ENCODE measurements at regions of chr6 and their contacts with region 1.

Region 1: DNA sequence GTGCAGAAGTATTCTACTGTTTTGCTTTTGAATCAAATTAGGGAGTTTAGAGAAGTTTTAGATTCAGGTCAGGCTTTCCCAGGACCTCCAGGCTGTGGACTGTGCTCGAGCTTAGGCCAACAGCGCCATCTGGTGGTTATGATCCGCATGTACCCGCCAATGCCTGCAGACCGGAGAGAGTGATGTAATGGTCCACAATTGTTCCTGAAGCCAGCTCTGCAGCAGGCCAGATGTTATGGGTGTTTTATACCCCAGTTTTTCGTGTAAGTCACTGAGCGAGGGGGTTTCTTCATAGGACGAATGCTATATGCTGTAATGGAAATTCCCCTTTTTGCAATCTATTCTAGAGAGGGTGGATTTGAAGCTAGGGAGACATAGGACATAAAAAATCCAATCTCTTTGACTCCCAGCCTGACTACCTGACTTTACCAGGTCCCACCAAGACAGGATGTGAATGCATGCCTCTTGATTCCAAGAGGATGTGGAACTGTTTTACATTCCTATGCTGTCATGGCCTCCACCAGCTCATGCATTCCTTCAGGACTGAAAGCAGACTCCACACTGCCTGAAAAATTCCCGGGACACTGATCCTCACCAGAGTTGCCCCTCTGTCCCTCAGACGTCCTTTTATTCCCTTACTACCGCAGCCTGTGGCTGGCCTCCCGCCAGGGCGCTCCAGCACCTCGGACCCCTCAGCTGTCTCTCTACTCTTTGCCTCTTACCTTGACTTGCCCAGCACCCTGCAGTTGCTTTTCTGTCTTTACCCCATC is 41.2 kb upstream of the LY86 start:
- DNase-seq: peak; percentile 97
- H3K4me3 ChIP-seq: peak overlapping the region; percentile 44 to 60 (median 49)
- H3K27ac ChIP-seq: no peak overlapping the region
- H3K4me1 ChIP-seq: peaks cover 13 to 15% (median 15%) of the 10 kb centered on the region in 4 donors
- H3K27me3 ChIP-seq: peaks cover 0 to 68% (median 4%) of the 10 kb centered on the region in 4 donors
- CTCF ChIP-seq: peak; percentile 71 to 90 (median 85)
- EP300 ChIP-seq: no peak
- POLR2A ChIP-seq: no peak

Region 2: GRCh38 chr6:6057424-6058053 is 489.8 kb before region 1 on chr6:
- intact Hi-C with region 1: loop called (anchors 10 kb)
- DNase-seq: no peak
- H3K4me3 ChIP-seq: no peak overlapping the region
- H3K27ac ChIP-seq: no peak overlapping the region
- H3K4me1 ChIP-seq: no peaks in the 10 kb centered on the region
- H3K27me3 ChIP-seq: peaks cover 0 to 12% (median 0%) of the 10 kb centered on the region in 4 donors
- CTCF ChIP-seq: peak in 2 of 3 experiments; percentile 43 to 45
- EP300 ChIP-seq: no peak
- POLR2A ChIP-seq: no peak

Region 3: DNA sequence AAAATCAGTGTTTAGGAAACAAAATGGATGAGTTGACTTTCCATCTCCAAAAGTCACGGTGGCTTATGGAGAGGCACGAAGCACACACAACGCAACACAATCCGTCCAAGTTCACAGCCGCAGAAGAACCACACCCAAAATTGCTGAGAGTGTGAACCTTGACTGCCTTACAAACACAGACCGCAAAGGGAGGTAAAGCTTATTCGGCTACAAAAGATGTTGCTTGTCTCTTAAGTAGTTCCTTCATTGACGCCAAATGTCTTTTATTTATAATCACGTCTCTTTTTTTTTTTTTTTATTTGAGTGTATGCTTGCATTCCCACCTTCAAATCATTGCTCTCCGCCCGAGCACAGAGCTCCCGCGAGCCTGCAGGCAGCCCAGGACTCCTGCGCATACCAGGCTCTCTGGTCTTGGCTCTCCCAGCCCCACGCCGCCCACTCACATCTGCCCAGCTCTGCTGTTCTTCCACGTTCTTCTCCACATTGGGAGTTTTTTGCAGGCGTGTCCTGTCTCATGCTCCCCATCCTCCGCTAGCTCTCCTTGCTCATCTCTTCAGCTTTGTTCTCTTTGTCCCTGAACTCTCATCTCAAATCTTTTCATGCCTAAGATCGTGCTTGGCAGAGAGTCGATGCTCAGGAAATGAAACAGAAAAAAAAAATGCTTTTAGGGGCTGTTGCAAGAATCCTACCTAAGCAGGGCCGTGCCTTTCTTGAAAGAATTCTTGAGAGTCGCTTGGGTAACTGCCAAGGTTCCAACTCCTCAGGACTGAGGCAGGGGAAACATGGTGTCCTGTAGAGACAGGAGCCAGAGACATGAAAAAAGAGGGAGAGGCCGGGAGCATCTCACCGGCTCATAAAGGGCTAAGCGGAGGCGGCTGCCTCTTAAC is 67.0 kb after region 1 on chr6:
- intact Hi-C with region 1: no loop called
- DNase-seq: no peak
- H3K4me3 ChIP-seq: no peak overlapping the region
- H3K27ac ChIP-seq: no peak overlapping the region
- H3K4me1 ChIP-seq: peaks cover 0 to 5% (median 0%) of the 10 kb centered on the region in 4 donors
- H3K27me3 ChIP-seq: no peaks in the 10 kb centered on the region
- CTCF ChIP-seq: no peak
- EP300 ChIP-seq: no peak
- POLR2A ChIP-seq: no peak